SK-N-SH (cell line): ENCODE measurements at regions of chr7 and their contacts with region 1.

Region 1: GRCh38 chr7:98420966-98421612 is 20.2 kb upstream of the BAIAP2L1 start:
- DNase-seq: peak; percentile 87
- H3K4me3 ChIP-seq: peak overlapping the region in 1 of 2 experiments; percentile 45; a peak in 1 of 4 replicates
- H3K27ac ChIP-seq: no peak overlapping the region
- H3K4me1 ChIP-seq: peaks cover 3 to 6% of the 10 kb centered on the region in 2 experiments; a peak in 2 of 4 replicates
- H3K27me3 ChIP-seq: no peaks in the 10 kb centered on the region
- CTCF ChIP-seq: peak; percentile 100
- EP300 ChIP-seq: no peak
- RAD21 ChIP-seq: peak; percentile 81

Region 2: GRCh38 chr7:98294796-98295382 is 126.2 kb before region 1 on chr7:
- CTCF ChIA-PET with region 1: interaction called, 17 read pairs
- POLR2A ChIA-PET with region 1: no interaction called
- DNase-seq: peak; percentile 93
- H3K4me3 ChIP-seq: no peak overlapping the region; a peak in 1 of 4 replicates
- H3K27ac ChIP-seq: no peak overlapping the region
- H3K4me1 ChIP-seq: peaks cover 0 to 6% of the 10 kb centered on the region in 2 experiments; a peak in 1 of 4 replicates
- H3K27me3 ChIP-seq: no peaks in the 10 kb centered on the region
- CTCF ChIP-seq: peak; percentile 87
- EP300 ChIP-seq: no peak
- RAD21 ChIP-seq: peak; percentile 90

Region 3: DNA sequence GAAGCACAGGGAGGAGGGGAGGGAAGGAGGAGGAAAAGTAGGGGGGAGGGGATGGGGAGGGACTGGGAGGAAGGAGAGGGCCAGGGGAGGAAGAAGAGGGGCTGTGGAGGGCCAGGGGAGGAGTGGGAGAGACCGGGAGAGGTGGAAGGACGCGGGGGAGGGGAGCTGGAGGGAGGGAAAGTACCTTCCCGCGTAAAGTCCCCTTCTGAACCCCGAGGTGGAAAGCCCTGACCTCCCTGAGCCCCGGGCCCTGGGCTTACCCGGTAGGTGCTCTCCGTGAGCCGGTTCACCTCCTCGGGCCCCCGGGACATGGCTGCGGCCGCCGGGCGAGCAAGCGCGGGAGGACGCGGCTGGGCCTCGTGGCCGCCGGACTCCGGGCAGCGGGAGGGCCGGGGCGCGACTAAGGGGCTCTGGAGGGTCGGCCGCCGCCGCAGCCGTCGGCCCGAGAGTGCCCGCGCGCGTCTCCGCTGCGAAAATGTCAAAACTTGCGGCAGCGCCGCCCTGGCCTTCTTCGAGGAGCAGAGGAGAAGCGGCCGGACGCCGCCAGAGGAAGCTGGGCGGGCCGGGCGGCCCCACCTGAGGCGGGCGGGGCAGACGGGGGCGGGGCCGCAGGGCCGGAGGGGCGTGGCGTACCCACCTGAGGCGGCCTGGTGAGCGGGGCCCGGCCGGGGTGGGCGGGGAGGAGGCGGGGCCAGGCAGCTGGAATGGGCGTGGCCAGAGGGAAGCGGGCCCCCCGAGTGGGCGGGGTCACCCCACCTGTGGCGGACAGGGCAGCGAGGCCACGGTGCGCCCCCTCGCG is 20.3 kb before region 1 on chr7 and contains the start of gene BAIAP2L1:
- CTCF ChIA-PET with region 1: interaction called, 124 read pairs
- POLR2A ChIA-PET with region 1: no interaction called
- DNase-seq: peak; percentile 100
- H3K4me3 ChIP-seq: peak within 1 kb of the TSS; percentile 58 to 63
- H3K27ac ChIP-seq: no peak within 1 kb of the TSS
- H3K4me1 ChIP-seq: peaks cover 4 to 8% of the 10 kb centered on the region in 2 experiments; a peak in 2 of 4 replicates
- H3K27me3 ChIP-seq: no peaks in the 10 kb centered on the region
- CTCF ChIP-seq: no peak
- EP300 ChIP-seq: no peak
- RAD21 ChIP-seq: peak; percentile 74
- polyA plus RNA-seq, gene BAIAP2L1: 8.7 and 8.8 TPM in 2 replicates

Region 4: DNA sequence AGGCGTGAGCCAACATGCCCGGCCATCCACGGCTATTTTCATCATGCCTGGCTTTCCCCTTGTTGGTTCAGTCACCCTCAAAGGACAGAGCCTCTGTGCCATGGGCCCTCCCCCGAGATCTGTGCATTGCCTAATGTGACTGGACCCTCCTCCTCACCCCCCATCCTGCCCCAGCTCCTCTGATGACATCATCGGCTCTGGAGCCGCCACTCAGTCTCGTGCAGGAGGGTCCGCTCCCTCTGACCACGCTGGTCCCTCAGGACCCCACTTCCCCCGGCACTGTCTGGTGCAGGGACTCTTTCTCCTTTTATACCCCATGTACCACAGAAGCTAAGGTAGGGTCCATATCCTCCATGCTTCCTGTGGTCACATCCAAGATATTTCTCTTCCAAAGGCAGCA is 13.0 kb after region 1 on chr7:
- CTCF ChIA-PET with region 1: interaction called, 24 read pairs
- POLR2A ChIA-PET with region 1: no interaction called
- DNase-seq: no peak
- H3K4me3 ChIP-seq: no peak overlapping the region
- H3K27ac ChIP-seq: no peak overlapping the region
- H3K4me1 ChIP-seq: no peaks in the 10 kb centered on the region
- H3K27me3 ChIP-seq: peaks cover 18% of the 10 kb centered on the region; the same call in 1 of the 2 replicates
- CTCF ChIP-seq: no peak
- EP300 ChIP-seq: no peak
- RAD21 ChIP-seq: no peak

Region 5: GRCh38 chr7:98617051-98617959 is 196.2 kb after region 1 on chr7 and contains the start of gene NPTX2:
- CTCF ChIA-PET with region 1: interaction called, 14 read pairs
- POLR2A ChIA-PET with region 1: no interaction called
- DNase-seq: peak; percentile 99
- H3K4me3 ChIP-seq: peak within 1 kb of the TSS in 1 of 2 experiments; percentile 52; a peak in 2 of 4 replicates
- H3K27ac ChIP-seq: peak within 1 kb of the TSS in 1 of 2 experiments; percentile 28; a peak in 1 of 4 replicates
- H3K4me1 ChIP-seq: peaks cover 0 to 48% of the 10 kb centered on the region in 2 experiments; a peak in 2 of 4 replicates
- H3K27me3 ChIP-seq: no peaks in the 10 kb centered on the region
- CTCF ChIP-seq: no peak
- EP300 ChIP-seq: no peak
- RAD21 ChIP-seq: peak; percentile 48
- polyA plus RNA-seq, gene NPTX2: 0.41 and 1.2 TPM in 2 replicates

Region 6: DNA sequence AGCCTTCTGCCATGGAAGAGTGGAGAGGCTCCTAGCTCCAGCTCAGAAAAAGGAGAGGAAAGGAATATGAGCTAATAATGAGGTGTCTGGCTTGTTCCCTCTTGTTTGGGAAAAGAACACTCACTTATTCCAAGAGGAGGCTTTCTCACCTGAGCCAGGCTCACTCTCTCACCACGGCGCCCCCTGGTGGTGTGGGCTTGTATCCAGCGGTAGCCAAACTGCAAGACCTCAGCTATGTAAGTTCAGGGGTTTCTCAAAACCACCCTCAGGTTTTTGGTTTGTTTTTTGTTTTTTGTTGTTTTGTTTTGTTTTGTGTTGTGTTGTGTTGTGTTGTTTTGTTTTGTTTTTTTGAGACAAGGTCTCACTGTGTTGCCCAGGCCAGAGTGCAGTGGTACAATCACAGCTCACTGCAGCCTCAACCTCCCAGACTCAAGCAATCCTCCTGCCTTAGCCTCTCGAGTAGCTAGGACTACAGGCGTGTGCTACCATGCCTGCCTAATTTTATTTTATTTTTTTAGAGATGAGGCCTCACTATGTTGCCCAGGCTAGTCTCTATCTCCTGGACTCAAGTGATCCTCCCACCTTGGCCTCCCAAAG is 324.7 kb after region 1 on chr7:
- CTCF ChIA-PET with region 1: interaction called, 39 read pairs
- POLR2A ChIA-PET with region 1: no interaction called
- DNase-seq: peak; percentile 79
- H3K4me3 ChIP-seq: peak overlapping the region in 1 of 2 experiments; percentile 56; a peak in 1 of 4 replicates
- H3K27ac ChIP-seq: no peak overlapping the region
- H3K4me1 ChIP-seq: no peaks in the 10 kb centered on the region
- H3K27me3 ChIP-seq: no peaks in the 10 kb centered on the region
- CTCF ChIP-seq: peak; percentile 59
- EP300 ChIP-seq: no peak
- RAD21 ChIP-seq: peak; percentile 79

Region 7: GRCh38 chr7:98878365-98879165 is 457.5 kb after region 1 on chr7 and contains the start of gene TRRAP:
- CTCF ChIA-PET with region 1: interaction called, 11 read pairs
- POLR2A ChIA-PET with region 1: interaction called, 3 read pairs
- DNase-seq: peak; percentile 98
- H3K4me3 ChIP-seq: peak within 1 kb of the TSS; percentile 75 to 99
- H3K27ac ChIP-seq: peak within 1 kb of the TSS; percentile 73 to 89
- H3K4me1 ChIP-seq: peaks cover 0 to 15% of the 10 kb centered on the region in 2 experiments; a peak in 1 of 4 replicates
- H3K27me3 ChIP-seq: no peaks in the 10 kb centered on the region
- CTCF ChIP-seq: peak; percentile 87
- EP300 ChIP-seq: 0 out of 4 replicates have a peak, but pooled peaks of 1 of the 2 experiments have one; percentile 24
- RAD21 ChIP-seq: no peak
- polyA plus RNA-seq, gene TRRAP: 19.6 and 24.9 TPM in 2 replicates